HEK293T (cell line): ENCODE measurements at regions of chr12 and their contacts with region 1.

Region 1: GRCh38 chr12:54140588-54141388 is 48.0 kb downstream of the SMUG1 start:
- DNase-seq: no peak

Region 2: DNA sequence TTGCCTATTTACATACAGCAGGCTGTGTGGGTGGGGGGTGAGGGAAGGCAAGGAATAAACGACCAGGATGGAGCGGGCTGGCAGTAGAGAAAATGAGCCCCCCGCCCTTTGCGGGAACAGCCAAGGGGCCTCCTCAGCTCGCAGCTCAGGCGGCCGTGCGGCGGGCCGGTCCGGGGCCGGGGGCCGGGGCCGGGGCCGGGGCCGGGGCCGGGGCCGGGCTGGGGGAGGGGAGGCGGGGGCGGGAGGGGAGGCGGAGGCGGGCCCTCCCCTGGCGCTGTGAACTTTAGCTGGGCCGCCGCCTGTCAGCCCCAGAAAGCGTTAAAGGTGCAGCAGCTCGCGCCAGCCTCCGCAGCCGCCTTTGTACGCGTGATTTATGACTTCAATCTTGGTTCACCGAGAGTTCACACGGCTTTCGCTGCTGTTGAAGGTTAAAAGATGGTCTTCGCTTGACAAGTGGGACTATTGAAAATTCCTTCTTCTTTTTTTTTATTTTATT is 58.3 kb before region 1 on chr12:
- CTCF ChIA-PET with region 1: no interaction called
- POLR2A ChIA-PET with region 1: no interaction called
- DNase-seq: peak; percentile 38

Region 3: DNA sequence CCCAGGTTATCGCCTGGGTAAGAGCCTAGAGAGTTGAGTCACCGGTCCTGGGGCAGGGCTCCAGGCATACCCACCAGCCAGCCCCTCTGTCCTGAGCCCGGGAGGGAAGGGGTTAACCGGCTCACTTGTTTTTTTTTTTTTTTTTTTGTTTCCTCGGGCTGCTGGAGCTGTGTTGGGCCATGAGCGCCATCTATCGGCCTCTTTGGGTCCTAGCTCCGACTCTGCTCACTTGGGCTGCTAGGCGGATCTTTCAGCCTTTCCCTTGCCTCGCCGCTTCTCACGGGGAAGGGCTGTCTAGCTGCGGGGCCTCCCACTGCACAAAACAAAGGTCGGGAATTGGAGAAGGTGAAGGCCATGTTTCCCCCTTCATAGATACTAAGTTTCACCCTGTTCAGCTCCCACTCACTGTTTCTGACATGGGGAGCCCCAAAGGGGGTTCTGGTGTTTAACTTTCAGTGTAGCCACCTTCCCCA is 50.8 kb after region 1 on chr12:
- CTCF ChIA-PET with region 1: interaction called, 12 read pairs
- POLR2A ChIA-PET with region 1: interaction called, 7 read pairs
- DNase-seq: peak; percentile 89

Region 4: DNA sequence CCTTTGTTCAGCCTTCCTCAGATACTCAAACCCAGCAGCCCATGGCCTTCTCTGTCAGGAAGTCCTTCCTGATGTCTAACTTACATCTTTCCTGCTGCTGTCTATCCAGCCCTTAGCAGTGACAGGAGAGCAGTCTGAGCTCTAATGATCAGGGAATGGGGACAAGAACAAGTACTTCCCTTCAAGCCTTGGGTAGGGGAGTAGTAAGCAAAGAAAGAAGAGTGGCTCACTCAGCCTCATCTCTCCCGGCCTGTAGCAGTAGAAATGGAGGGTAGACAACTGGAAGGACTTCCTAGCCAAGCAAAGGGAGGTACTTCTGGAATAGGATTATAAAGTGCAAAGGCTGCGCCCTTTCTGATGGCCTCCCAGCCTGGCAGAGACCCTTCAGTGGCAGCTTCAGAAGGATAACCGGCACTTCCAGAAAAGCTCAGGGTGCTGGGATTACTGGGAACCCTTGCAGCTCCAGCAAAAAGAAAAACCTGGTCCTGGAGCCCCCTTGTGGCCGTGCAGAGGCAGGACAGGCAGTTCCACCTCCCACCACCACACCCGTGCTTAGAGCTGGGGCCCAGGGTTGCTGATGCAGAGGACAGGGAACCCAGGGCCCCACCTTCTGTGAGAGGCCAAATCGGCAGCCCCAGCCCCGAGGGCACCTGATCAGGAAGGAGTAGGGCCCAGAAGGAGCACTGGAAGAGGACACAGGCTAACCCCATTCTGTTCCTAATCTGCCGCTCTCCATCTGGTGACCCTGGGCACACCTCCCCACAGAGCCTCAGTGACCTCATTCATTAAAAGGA is 60.4 kb after region 1 on chr12:
- CTCF ChIA-PET with region 1: interaction called, 10 read pairs
- POLR2A ChIA-PET with region 1: no interaction called
- DNase-seq: peak; percentile 82

Region 5: GRCh38 chr12:54207484-54208294 is 66.9 kb after region 1 on chr12:
- CTCF ChIA-PET with region 1: interaction called, 12 read pairs
- POLR2A ChIA-PET with region 1: no interaction called
- DNase-seq: peak; percentile 77